ENCODE measurements at regions of chr15 and their contacts with region 1.

Region 1: DNA sequence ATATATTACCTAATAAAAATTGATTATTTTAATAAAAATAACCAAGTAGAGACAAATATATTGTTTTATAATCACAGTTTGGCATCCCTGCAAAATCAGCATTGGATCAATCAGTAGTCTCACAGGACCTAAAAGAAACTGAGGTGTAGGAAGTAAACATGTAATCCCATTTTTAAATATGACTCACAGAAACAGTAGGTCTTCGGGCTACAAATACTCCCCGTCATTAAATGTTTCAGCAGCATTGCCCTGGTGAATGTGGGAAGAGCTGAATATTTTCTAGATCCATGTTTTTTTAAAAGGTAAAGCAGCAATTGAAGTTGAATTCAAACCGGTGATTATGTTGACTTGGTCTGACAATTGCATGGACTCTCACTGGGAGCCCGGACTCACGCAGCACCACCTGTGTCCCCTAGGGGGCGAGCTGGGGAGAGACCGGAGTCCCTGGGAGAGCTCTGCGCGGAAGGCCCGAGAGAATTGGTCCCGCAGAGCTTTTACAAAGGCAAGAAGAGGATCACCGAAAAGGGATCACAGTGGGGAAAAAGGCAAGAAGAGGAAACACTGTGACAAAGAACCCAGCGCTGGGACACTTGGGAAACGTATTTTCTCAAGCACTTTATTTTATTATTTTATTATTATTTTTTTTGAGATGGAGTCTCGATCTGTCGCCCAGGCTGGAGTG is 17.2 kb upstream of the USP3 start:
- DNase-seq: peak; percentile 94
- ATAC-seq: peak; percentile 91
- H3K4me3 Mint-ChIP-seq: peak overlapping the region; percentile 14
- H3K27ac Mint-ChIP-seq: peak overlapping the region; percentile 62
- H3K4me1 Mint-ChIP-seq: peaks cover 54% of the 10 kb centered on the region
- H3K27me3 Mint-ChIP-seq: no peaks in the 10 kb centered on the region
- CTCF ChIP-seq: peak; percentile 98

Region 2: DNA sequence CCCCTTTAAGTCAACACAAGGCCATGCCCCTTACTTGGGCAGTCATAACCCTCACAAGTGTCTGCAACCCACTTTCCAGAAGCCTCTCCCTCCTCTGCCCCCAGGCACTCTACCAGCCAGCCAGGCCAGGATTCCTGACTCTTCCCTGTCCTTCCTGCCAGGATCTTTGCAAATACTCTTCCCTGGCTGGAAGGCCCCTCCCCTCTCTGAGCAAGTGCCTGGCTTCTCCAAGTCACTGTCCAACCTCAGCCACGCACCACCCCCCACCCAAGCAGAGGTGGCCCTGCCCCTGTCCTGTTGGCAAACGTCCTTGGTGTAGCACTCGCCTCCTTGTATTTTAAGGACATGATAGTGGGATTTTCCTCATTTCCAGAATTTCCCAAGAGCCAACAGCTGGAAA is 37.5 kb before region 1 on chr15:
- CTCF ChIA-PET with region 1: no interaction called
- POLR2A ChIA-PET with region 1: no interaction called
- intact Hi-C with region 1: no loop called
- DNase-seq: no peak
- ATAC-seq: no peak
- H3K4me3 Mint-ChIP-seq: no peak overlapping the region
- H3K27ac Mint-ChIP-seq: no peak overlapping the region
- H3K4me1 Mint-ChIP-seq: peaks cover 25% of the 10 kb centered on the region
- H3K27me3 Mint-ChIP-seq: no peaks in the 10 kb centered on the region
- CTCF ChIP-seq: no peak

Region 3: DNA sequence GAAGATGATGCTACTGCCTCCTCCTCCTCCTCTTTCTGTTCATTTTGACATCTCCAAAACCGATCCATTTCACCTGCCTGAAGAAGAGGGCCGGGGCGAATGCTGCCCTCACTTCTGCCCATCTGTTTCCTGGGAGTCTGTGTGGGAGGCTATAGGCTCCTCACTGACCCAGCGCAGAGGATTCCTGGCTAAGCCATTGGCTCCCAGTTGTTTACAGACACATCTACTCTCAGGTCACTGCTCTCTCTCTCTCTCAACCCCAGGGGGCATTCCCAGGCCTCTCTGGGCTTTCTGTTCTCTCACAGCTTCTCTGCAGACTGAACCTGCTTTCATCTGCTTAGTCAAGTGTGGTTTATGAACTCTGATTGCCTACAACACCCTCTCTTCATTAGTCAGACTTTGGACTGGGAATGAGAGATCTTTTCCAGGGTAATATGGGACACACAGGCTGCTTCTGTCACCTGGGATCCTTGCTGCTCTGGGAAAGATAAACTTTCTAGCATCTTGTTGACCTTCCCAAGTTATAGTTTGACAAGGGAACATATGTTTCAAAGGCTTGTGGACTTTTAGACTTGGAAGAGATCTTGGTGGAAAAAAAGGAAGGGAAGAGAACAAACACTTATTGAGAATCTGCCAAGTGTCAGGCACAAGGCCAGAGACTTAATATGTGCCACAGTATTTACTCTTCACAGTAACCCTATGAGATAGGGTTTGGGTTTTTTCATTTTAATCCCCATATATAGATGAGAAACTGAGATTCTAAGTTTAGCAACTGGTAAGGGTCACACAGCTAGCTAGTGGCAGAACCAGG is 13.0 kb before region 1 on chr15:
- CTCF ChIA-PET with region 1: interaction called, 10 read pairs
- POLR2A ChIA-PET with region 1: interaction called, 3 read pairs
- intact Hi-C with region 1: no loop called
- DNase-seq: peak; percentile 82
- ATAC-seq: peak; percentile 77
- H3K4me3 Mint-ChIP-seq: peak overlapping the region; percentile 34
- H3K27ac Mint-ChIP-seq: peak overlapping the region; percentile 92
- H3K4me1 Mint-ChIP-seq: peaks cover 52% of the 10 kb centered on the region
- H3K27me3 Mint-ChIP-seq: no peaks in the 10 kb centered on the region
- CTCF ChIP-seq: no peak

Region 4: DNA sequence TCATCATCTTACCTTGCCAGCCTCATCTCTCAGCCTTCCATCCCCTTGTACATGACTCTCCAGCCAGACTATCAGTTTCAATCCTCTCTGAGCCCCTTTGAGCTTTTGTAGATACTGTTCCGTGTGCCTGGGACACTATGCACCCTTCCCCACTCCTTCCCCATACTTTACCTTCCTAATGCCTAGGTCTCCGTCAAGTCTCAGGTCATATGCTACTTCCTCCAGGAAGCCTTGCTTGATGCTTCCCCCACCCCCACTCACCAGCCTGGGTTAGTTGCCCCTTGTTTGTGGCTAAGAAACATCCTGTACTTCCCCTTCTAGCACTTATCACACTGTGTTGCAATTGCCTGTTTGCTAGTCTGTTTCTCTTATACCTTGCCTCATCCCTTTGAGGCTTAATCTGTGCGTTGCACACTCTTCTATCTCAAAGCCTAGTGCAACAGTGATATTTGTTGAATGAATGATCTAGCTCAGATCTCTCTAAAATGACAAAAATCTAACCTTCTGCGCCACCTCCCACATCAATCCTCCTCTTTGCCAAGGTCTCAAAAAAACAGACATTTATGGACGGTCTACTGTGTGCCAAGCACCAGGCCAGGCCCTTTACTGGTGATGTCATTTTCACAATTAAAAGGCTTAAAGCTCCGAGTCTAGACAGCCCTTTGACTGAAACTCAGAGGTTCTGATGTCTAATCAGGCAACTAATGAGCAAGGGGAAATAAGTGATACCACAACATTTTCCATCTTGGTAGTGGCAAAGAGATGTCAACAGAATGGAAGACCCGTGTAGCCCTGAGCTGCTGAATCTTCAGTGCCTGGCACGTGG is 10.6 kb after region 1 on chr15:
- CTCF ChIA-PET with region 1: interaction called, 62 read pairs
- POLR2A ChIA-PET with region 1: interaction called, 34 read pairs
- intact Hi-C with region 1: no loop called
- DNase-seq: peak; percentile 82
- ATAC-seq: peak; percentile 60
- H3K4me3 Mint-ChIP-seq: no peak overlapping the region
- H3K27ac Mint-ChIP-seq: no peak overlapping the region
- H3K4me1 Mint-ChIP-seq: peaks cover 75% of the 10 kb centered on the region
- H3K27me3 Mint-ChIP-seq: no peaks in the 10 kb centered on the region
- CTCF ChIP-seq: no peak

Region 5: DNA sequence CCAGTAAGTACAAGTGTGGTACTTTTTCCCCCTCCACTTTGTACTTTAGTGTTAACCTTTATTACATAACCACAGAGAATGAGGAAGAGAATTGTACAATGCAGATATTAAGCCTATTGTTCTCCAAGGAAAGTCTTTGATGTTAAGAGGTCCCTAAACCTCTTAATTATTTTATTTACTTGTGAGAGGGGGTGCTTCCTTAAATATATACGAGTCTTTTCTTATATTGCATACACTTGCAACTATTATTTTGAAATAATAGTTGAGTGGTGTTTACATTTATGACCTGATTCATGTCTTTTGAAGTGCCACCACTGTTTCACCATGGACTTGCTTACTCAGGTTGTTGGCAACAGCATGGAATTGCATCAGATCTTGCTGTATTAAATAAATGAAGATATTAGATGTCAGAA is 27.3 kb after region 1 on chr15:
- CTCF ChIA-PET with region 1: interaction called, 26 read pairs
- POLR2A ChIA-PET with region 1: interaction called, 4 read pairs
- intact Hi-C with region 1: no loop called
- DNase-seq: no peak
- ATAC-seq: no peak
- H3K4me3 Mint-ChIP-seq: peak overlapping the region; percentile 45
- H3K27ac Mint-ChIP-seq: peak overlapping the region; percentile 84
- H3K4me1 Mint-ChIP-seq: peaks cover 91% of the 10 kb centered on the region
- H3K27me3 Mint-ChIP-seq: no peaks in the 10 kb centered on the region
- CTCF ChIP-seq: no peak

Region 6: GRCh38 chr15:63522225-63522578 is 35.0 kb after region 1 on chr15:
- CTCF ChIA-PET with region 1: interaction called, 11 read pairs
- POLR2A ChIA-PET with region 1: no interaction called
- intact Hi-C with region 1: no loop called
- DNase-seq: no peak
- ATAC-seq: no peak
- H3K4me3 Mint-ChIP-seq: no peak overlapping the region
- H3K27ac Mint-ChIP-seq: no peak overlapping the region
- H3K4me1 Mint-ChIP-seq: peaks cover 88% of the 10 kb centered on the region
- H3K27me3 Mint-ChIP-seq: no peaks in the 10 kb centered on the region
- CTCF ChIP-seq: no peak

Region 7: DNA sequence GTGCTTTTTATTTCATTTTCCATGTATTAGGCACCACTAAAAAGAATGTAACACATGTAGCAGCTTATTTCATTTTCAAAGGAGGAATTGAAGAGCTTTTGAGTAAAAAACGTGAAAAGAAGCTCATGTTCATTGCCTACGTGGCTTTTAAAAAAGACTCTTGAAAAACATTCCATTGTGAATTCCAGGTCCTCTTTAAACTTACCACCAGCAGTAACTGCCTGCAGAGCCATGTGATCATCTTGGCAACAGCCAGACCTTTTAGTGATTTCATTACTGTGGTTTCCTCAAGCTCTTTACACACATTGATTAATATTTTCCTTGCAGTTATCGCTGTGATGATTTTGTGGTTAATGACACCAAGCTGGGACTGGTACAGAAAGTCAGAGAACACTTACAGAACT is 66.2 kb after region 1 on chr15:
- CTCF ChIA-PET with region 1: interaction called, 13 read pairs
- POLR2A ChIA-PET with region 1: no interaction called
- intact Hi-C with region 1: no loop called
- DNase-seq: peak; percentile 15
- ATAC-seq: peak; percentile 67
- H3K4me3 Mint-ChIP-seq: no peak overlapping the region
- H3K27ac Mint-ChIP-seq: peak overlapping the region; percentile 70
- H3K4me1 Mint-ChIP-seq: peaks cover 52% of the 10 kb centered on the region
- H3K27me3 Mint-ChIP-seq: no peaks in the 10 kb centered on the region
- CTCF ChIP-seq: no peak

Measured in activated CD8-positive, alpha-beta T cell treated with anti-CD3 and anti-CD28 coated beads for 36 hours (primary cell).